PC-9 (cell line): ENCODE measurements at regions of chr20 and their contacts with region 1.

Region 1: GRCh38 chr20:38165089-38165989 is at the start of gene TGM2:
- DNase-seq: peak; percentile 75 to 95
- H3K4me3 ChIP-seq: peak within 1 kb of the TSS; percentile 98
- H3K27ac ChIP-seq: peak within 1 kb of the TSS; percentile 52
- H3K4me1 ChIP-seq: peaks cover 72% of the 10 kb centered on the region
- H3K27me3 ChIP-seq: no peaks in the 10 kb centered on the region
- CTCF ChIP-seq: peak; percentile 88
- total RNA-seq, gene TGM2: 286 and 333 TPM in 2 replicates

Region 2: GRCh38 chr20:37564388-37565133 is 600.8 kb before region 1 on chr20:
- CTCF ChIA-PET with region 1: interaction called, 5 read pairs
- POLR2A ChIA-PET with region 1: no interaction called
- intact Hi-C with region 1: loop called (anchors 10 kb)
- DNase-seq: peak in 1 of 2 experiments; percentile 61
- H3K4me3 ChIP-seq: no peak overlapping the region
- H3K27ac ChIP-seq: no peak overlapping the region
- H3K4me1 ChIP-seq: no peaks in the 10 kb centered on the region
- H3K27me3 ChIP-seq: peaks cover 49% of the 10 kb centered on the region
- CTCF ChIP-seq: peak; percentile 95

Region 3: GRCh38 chr20:37969949-37970855 is 195.1 kb before region 1 on chr20:
- CTCF ChIA-PET with region 1: no interaction called
- POLR2A ChIA-PET with region 1: no interaction called
- intact Hi-C with region 1: no loop called
- DNase-seq: no peak
- H3K4me3 ChIP-seq: no peak overlapping the region
- H3K27ac ChIP-seq: no peak overlapping the region
- H3K4me1 ChIP-seq: no peaks in the 10 kb centered on the region
- H3K27me3 ChIP-seq: peaks cover 20% of the 10 kb centered on the region
- CTCF ChIP-seq: no peak

Region 4: DNA sequence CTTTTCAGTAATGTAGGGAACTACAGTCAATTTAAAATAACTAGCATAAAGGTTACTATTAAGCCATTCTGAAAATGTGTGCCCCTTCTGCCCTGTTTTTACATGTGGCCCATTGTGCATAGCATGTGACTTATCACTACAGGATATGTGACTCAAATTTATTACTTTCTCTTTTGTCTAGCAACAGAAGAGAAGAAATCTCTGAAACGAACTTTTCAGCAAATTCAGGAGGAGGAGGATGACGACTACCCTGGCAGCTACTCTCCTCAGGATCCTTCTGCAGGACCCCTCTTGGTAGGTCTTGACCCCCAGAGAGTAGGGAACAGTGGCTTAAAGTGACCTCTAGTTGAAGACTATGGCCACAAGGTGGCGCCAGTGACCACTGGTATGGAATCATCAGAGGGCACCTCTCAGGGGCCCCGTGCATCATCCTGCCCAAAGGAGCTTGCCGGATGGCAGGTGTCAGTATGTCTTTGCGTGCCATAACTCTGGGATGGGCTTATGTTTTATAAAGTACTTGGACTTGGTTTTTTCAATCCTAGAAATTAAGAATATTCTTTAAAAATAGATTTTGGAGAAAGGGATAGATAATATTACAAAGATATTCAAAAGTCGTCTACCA is 107.9 kb before region 1 on chr20:
- CTCF ChIA-PET with region 1: interaction called, 19 read pairs
- POLR2A ChIA-PET with region 1: no interaction called
- intact Hi-C with region 1: loop called (anchors 1 kb)
- DNase-seq: peak; percentile 53 to 76
- H3K4me3 ChIP-seq: no peak overlapping the region
- H3K27ac ChIP-seq: no peak overlapping the region
- H3K4me1 ChIP-seq: no peaks in the 10 kb centered on the region
- H3K27me3 ChIP-seq: no peaks in the 10 kb centered on the region
- CTCF ChIP-seq: peak; percentile 99

Region 5: DNA sequence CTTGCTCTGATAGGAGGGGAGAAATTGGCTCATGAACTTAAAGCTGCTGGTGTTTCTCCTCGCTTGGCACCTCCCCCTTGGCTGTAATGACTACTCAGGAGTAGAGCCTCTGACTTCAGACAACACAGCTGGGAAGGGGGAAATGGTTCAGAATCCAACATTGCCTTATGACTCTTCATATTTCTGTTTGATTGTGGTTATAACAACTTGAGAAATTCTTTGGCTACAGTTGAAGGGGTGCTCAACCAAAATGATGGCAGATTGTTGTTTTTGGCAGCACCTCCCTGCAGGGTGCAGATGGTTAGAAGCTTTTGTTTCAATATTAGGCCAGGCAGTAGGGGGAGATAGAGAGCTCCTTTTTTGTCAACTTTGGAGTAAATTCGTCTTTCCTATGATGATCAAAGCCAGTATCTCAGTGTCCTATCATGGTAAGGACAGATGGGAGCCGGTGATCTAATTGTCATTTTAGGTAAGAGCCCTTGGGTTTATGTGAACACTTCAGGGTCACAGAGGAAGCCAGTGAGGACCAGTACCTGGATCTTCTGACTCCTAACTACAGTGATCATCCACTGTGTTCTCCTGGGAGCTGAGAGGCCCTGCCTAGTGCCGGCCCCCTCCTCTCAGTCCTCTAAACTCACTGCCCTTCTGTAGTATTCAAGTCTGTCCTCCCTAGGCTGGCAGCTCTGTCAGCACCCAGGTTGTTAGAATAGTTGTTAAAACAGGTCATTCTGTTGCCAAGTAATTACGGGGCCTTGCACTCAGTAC is 91.8 kb before region 1 on chr20:
- CTCF ChIA-PET with region 1: interaction called, 6 read pairs
- POLR2A ChIA-PET with region 1: interaction called, 3 read pairs
- intact Hi-C with region 1: loop called (anchors 1 kb)
- DNase-seq: peak; percentile 63 to 80
- H3K4me3 ChIP-seq: no peak overlapping the region
- H3K27ac ChIP-seq: peak overlapping the region; percentile 53
- H3K4me1 ChIP-seq: peaks cover 26% of the 10 kb centered on the region
- H3K27me3 ChIP-seq: no peaks in the 10 kb centered on the region
- CTCF ChIP-seq: peak; percentile 85

Region 6: DNA sequence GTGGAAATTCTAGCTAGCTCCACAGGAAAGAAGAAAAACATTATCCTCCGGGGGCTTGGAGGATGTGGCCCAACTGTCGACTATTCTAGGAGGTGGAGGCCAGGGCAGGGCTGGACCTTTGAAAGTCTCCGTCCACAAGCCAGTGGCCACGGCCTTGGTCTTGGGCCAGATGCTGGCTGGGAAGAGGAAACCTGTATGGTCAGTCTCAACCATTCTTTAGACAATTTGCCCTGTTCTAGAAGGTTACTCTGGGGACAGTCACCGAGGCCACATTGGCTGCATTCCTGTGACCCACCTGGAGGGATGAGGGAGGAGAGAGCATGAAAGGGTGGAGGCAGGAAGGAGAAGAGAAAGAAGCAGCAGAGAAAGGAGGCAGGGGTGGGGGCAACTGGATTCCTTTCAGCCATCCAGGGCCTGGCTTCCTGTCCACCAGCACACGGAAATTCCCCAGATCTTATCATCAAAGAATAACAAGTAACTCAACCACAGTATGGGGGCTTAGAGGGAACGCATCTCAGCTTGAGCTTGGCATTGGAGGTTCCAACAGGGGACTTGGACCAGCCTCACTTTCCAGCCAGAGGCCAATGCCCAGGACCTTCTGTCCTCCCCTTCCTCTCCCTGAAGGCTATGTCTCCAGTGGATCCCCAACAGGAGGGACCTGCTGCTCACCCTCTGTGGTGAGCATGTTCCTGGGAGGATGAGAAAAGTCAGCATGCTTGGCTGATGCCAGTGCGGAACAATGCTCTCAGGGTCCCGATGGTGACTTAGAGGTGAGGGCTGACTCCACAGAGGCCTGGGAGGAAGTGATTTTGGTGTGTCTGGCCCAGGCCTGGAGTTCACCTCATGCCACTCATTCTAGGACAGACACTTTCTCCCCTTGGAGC is 30.7 kb before region 1 on chr20:
- CTCF ChIA-PET with region 1: no interaction called
- POLR2A ChIA-PET with region 1: no interaction called
- intact Hi-C with region 1: loop called (anchors 1 kb)
- DNase-seq: peak; percentile 95 to 96
- H3K4me3 ChIP-seq: no peak overlapping the region
- H3K27ac ChIP-seq: peak overlapping the region; percentile 92
- H3K4me1 ChIP-seq: peaks cover 65% of the 10 kb centered on the region
- H3K27me3 ChIP-seq: no peaks in the 10 kb centered on the region
- CTCF ChIP-seq: no peak

Region 7: GRCh38 chr20:38153368-38153767 is 12.0 kb before region 1 on chr20:
- CTCF ChIA-PET with region 1: no interaction called
- POLR2A ChIA-PET with region 1: no interaction called
- intact Hi-C with region 1: no loop called
- DNase-seq: no peak
- H3K4me3 ChIP-seq: no peak overlapping the region
- H3K27ac ChIP-seq: peak overlapping the region; percentile 55
- H3K4me1 ChIP-seq: peaks cover 56% of the 10 kb centered on the region
- H3K27me3 ChIP-seq: no peaks in the 10 kb centered on the region
- CTCF ChIP-seq: no peak

Region 8: DNA sequence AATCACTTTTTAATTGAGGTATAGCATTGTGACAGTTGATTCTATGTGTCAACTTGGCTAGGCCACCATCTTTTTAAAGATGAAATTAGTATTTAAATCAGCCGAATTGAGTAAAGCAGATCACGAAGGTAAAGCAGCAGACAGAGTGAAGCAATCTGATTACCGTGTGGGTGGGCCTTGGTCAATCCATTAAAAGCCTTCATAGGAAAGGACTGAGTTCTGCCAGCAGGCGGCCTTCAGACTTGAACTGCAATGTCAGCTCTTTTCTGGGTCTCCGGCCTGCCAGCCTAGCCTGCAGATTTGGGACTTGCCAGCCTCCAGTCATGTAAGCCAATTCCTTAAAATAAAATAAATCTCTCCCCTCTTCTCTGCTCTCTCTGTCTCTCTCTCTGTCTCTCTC is 22.2 kb after region 1 on chr20:
- CTCF ChIA-PET with region 1: no interaction called
- POLR2A ChIA-PET with region 1: interaction called, 3 read pairs
- intact Hi-C with region 1: loop called (anchors 1 kb)
- DNase-seq: no peak
- H3K4me3 ChIP-seq: no peak overlapping the region
- H3K27ac ChIP-seq: peak overlapping the region; percentile 86
- H3K4me1 ChIP-seq: peaks cover 64% of the 10 kb centered on the region
- H3K27me3 ChIP-seq: no peaks in the 10 kb centered on the region
- CTCF ChIP-seq: no peak

Region 9: DNA sequence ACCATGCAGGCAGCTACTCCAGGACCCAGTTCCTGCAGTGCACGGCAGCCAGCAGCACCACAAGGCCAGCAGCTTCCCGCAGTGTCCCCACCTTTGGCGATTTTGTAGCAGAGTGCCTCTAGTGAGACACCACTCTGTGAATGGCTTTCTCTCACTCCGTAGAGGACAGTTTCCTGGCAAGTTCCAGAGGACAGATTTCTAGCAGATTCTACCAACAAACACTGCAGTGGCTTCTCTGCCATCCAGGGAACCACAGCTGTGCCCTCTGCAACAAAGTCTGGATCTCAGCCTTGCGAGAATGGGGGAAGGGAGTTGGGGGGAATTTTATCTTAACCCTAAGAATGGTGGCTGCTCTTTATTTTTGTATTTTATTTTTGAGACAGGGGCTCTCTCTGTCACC is 241.1 kb after region 1 on chr20:
- CTCF ChIA-PET with region 1: no interaction called
- POLR2A ChIA-PET with region 1: no interaction called
- intact Hi-C with region 1: loop called (anchors 5 kb)
- DNase-seq: no peak
- H3K4me3 ChIP-seq: no peak overlapping the region
- H3K27ac ChIP-seq: no peak overlapping the region
- H3K4me1 ChIP-seq: no peaks in the 10 kb centered on the region
- H3K27me3 ChIP-seq: no peaks in the 10 kb centered on the region
- CTCF ChIP-seq: no peak